Head of caudate nucleus (tissue), 42 donors: ENCODE measurements at regions of chr10 and their contacts with region 1.

Region 1: DNA sequence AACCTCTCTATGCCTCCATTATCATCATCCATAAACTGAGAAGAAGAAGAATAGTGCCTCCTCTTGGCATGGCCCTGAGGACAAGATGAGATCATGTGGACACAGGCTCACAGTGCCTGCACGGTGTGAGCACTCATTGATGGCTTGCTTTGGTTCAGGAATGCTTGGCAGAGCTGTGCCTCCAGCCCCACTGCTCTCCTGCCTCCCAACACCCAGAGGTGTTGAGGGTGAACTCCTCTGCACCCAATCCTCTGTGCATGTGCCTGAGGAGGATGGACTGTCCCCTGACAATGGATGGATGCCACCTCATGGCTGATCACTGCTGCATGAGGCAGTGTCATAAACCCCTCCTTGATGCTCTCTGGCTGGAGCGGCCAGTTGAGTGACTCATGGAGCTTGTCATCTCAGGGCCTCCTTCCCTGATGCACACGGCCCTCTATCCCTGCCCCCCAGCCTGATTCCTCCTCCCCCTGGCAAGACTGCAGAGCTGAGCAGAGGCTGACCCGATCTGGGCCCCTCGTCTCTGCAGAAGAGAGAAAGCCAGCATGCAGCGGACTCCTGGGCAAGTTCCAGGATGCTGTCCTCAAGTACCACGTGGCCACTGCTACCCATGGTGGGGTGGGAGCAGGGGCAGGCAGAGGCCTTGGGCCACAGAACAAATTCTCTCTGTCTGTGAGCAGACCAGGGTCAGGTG is 136.3 kb downstream of the KCNMA1 start:
- DNase-seq: peak in 30 of 42 donors; percentile 13 to 77 (median 39)

Region 2: DNA sequence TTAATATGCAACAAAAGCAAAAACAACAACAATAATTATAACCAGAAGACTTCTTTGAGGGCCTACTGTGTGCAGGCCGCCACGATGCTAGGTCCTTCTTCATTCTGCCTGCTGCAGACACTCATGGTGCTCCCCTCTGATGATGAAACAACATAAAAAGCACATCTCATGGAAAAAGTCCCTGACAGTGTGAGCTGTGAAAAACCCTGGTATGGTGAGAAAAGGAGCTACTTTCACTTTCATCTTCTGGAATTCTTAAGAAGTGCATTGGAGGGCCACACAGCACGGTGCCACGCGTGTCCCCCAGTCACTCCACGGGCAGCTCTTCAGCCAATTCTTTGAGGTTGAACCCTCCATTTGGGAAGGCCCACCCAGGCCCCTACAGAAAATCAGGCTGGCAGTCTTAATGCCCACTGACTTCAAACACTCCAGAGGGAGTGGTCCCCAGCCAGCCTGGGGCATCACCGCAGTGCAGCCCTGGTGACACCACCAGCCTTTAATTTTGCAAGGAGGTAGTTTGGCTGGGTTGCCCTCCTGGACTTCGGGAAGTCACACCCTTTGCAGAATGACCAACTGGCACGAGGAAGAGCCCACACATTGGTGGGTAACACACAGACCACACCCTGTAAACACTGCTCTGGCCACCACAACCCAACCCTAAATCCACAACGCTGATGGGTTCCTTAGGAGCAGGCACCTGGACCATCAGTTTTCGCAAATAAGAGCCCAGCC is 128.6 kb after region 1 on chr10:
- intact Hi-C with region 1: loop called (anchors 5 kb)
- DNase-seq: peak in 1 of 42 donors; percentile 26